Dendritic cell treated with granulocyte-macrophage colony-stimulating factor and Interleukin-4, amounts not matched to agents 40 ng/mL and 50 ng/mL, for 4 days (primary cell): ENCODE measurements at regions of chr21 and their contacts with region 1.

Region 1: DNA sequence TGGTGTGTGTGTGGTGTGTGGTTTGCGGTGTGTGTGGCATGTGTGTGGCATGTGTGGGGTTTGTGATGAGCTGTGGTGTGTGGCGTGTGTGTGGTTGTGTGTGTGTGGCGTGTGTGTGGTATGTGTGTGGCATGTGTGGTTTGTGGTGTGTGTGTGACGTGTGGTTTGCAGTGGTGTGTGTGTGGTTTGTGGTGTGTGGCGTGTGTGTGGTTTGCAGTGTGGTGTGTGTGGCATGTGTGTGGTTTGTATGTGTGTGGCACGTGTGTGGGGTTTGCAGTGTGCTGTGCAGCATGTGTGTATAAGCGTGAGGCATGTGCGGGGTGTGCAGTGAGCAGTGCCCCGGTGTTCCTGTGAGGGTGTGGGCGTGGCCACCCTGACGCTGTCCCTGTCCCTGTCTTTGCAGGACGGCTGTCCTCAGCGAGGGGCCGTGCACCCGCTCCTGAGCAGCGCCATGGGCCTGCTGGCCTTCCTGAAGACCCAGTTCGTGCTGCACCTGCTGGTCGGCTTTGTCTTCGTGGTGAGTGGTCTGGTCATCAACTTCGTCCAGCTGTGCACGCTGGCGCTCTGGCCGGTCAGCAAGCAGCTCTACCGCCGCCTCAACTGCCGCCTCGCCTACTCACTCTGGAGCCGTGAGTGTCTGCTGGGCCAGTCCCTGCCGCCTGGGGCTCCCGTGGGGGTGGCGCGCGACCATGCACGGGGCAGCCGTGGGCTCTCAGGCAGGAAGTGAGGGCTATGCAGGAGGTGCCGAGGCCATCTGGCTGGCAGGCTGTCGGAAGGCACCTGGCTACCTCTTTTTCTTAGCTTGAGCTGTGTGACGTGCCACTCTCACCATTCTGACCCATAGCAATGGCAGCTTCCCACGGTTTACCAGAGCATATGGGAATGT is 52.6 kb upstream of the TRAPPC10 start:
- H3K4me3 Mint-ChIP-seq: no peak overlapping the region
- H3K27ac Mint-ChIP-seq: no peak overlapping the region
- H3K4me1 Mint-ChIP-seq: no peaks in the 10 kb centered on the region
- H3K27me3 Mint-ChIP-seq: no peaks in the 10 kb centered on the region

Region 2: GRCh38 chr21:43676391-43676790 is 283.1 kb before region 1 on chr21:
- intact Hi-C with region 1: loop called (anchors 10 kb)
- H3K4me3 Mint-ChIP-seq: no peak overlapping the region
- H3K27ac Mint-ChIP-seq: no peak overlapping the region
- H3K4me1 Mint-ChIP-seq: peaks cover 5% of the 10 kb centered on the region
- H3K27me3 Mint-ChIP-seq: no peaks in the 10 kb centered on the region